ENCODE measurements at regions of chr15 and their contacts with region 1.

Region 1: DNA sequence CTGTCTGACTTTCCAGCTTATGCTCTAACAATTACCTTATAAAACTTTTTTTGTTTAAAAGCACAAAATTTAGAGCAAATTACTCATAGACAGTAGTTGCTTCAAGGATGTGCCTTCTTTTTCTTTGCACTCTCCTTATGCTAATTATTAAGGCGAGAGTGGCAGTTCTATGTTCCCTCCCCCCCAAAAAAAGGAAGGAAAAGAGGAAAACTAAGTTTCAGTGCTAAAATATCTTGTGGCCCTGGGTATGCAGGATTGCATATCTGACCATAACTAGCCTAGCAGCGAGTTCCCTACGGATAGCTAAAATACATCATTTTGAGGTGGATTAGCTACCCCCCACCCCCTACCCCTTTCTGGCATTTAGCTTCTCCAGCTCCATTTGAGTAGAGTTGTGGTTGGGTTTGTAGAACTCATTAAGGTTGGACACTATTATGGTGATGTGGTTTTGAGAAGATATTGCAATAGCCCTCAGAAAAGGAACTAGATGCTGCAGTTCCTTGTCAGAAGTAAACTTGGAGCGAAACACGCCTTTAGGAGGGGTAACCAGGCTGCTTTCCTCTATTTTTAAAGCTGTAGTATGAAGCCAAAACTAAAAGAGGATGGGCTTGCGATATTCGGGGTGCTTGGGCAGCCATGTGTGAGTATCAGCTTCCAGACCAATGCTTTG is 174.6 kb downstream of the AKAP13 start:
- DNase-seq: no peak
- ATAC-seq: peak; percentile 72
- H3K4me3 ChIP-seq: no peak overlapping the region
- H3K4me3 Mint-ChIP-seq: no peak overlapping the region
- H3K27ac ChIP-seq: no peak overlapping the region
- H3K27ac Mint-ChIP-seq: peak overlapping the region in 4 of 9 donors; percentile 1 to 42 (median 20)
- H3K4me1 ChIP-seq: peaks cover 17 to 20% of the 10 kb centered on the region in 2 donors
- H3K4me1 Mint-ChIP-seq: peaks cover 15 to 60% (median 49%) of the 10 kb centered on the region in 7 donors
- H3K27me3 ChIP-seq: no peaks in the 10 kb centered on the region
- H3K27me3 Mint-ChIP-seq: no peaks in the 10 kb centered on the region

Region 2: DNA sequence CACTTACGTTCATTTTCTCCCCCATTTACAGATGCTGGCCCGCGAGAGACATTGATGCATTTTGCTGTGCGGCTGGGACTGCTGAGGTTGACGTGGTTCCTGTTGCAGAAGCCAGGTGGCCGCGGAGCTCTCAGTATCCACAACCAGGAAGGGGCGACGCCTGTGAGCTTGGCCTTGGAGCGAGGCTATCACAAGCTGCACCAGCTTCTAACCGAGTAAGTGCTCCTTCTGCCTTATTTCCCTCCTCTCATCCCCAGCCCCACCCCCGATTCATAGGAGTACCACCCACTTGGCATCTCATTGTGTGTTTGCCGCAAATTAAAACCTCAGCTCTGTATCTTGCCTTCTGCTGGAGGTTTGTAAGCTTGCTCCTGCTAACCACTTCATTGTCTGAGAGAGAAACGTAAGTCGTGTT is 11.2 kb before region 1 on chr15:
- CTCF ChIA-PET with region 1: no interaction called
- POLR2A ChIA-PET with region 1: no interaction called
- intact Hi-C with region 1: loop called in 1 of 2 experiments (anchors 2 kb)
- DNase-seq: peak in 8 of 9 donors; percentile 18 to 60 (median 40)
- ATAC-seq: peak; percentile 81
- H3K4me3 ChIP-seq: no peak overlapping the region
- H3K4me3 Mint-ChIP-seq: peak overlapping the region; percentile 46 to 76 (median 63)
- H3K27ac ChIP-seq: peak overlapping the region; percentile 32
- H3K27ac Mint-ChIP-seq: peak overlapping the region; percentile 44 to 93 (median 69)
- H3K4me1 ChIP-seq: peaks cover 0 to 21% of the 10 kb centered on the region in 2 donors
- H3K4me1 Mint-ChIP-seq: peaks cover 49 to 87% (median 77%) of the 10 kb centered on the region in 7 donors
- H3K27me3 ChIP-seq: no peaks in the 10 kb centered on the region
- H3K27me3 Mint-ChIP-seq: no peaks in the 10 kb centered on the region